Activated CD4-positive, alpha-beta T cell treated with anti-CD3 and anti-CD28 coated beads, Interleukin-2, amount 10 ng/mL, durations not matched to agents 24 days and 14 days (primary cell): ENCODE measurements at regions of chr11 and their contacts with region 1.

Region 1: DNA sequence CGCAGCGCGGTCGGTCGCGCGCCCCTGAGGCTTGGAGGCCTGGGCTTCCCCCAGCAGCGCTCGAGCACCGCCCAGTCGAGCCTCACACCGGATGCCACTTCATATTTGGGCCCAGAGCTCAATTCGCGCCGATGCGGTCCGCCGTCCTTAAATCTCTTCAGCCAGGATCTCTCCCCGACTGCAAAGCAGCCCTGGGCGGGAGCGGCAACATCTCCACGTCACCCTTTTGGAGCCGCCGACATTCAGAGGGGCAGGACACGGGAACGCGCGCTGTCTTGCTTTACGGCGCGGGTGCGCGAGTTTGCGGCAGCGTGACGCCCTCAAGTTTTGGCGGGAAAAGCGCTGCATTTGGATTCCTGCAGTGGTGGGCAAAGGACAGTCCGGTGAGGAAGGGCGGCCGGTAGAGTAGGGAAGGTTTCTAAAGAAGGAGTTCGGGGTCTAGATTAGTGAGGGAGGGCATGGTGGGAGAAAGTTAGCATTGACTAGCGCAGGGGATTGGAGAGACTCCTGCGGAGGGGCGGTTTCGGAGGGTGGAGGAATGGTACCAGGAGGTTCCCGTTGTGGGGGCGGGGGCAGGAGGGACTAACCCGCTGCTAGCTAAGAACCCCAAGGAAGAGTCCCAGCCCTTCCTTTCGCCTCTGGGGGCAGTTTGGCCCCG is 796 bp downstream of the CHEK1 start:
- DNase-seq: peak; percentile 96
- H3K4me3 Mint-ChIP-seq: peak overlapping the region; percentile 93
- H3K27ac Mint-ChIP-seq: peak overlapping the region; percentile 95
- H3K4me1 Mint-ChIP-seq: peaks cover 24% of the 10 kb centered on the region
- H3K27me3 Mint-ChIP-seq: no peaks in the 10 kb centered on the region

Region 2: DNA sequence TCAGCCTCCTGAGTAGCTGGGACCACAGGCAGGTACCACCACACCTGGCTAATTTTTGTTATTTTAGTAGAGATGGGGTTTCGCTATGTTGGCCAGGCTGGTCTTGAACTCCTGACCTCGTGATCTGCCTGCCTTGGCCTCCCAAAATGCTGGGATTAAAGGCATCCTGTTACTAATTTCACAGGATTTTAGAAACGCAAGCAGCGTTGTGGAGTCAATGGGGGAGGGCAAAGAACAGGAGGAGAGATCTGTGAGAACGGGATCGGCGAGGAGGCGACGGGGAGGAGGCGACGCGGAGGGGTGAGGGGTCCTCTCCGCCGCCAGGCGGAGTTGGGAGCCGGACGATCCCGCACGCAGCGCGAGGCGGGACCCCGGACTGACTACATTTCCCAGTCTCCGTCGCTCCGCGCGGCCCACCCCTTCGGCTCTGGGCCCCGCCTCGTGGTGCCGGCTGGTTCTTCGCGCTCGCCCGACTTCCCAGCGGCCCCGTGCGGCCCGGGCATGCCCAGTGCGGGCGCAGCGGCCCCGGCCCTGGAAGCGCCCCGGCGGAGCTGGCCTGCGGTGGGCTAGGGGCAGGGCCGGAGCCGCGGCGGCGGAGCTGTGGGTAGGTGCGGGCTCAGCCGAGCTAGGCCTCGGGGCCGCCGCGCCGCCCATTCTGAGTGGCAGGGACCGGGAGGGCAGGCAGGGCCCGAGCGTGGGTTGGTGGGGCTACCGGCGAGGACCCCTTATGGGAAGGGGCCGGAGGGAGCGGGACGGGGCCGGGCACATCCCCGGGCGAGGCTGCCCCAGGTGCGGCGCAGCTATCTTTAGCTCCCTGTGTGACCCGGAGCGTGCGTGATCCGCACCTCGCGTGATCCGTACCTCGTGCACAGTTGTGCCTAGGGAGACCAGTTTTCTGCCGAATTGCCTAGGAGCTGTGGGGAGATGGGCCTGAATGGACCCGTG is 56.5 kb before region 1 on chr11 and contains the start of gene EI24:
- intact Hi-C with region 1: loop called (anchors 1 kb)
- DNase-seq: peak; percentile 97
- H3K4me3 Mint-ChIP-seq: peak within 1 kb of the TSS; percentile 96
- H3K27ac Mint-ChIP-seq: peak within 1 kb of the TSS; percentile 94
- H3K4me1 Mint-ChIP-seq: peaks cover 18% of the 10 kb centered on the region
- H3K27me3 Mint-ChIP-seq: no peaks in the 10 kb centered on the region
- total RNA-seq, gene EI24: 61.7 TPM in 2 replicates

Region 3: GRCh38 chr11:125663910-125664309 is 38.2 kb after region 1 on chr11:
- intact Hi-C with region 1: loop called (anchors 5 kb)
- DNase-seq: no peak
- H3K4me3 Mint-ChIP-seq: no peak overlapping the region
- H3K27ac Mint-ChIP-seq: peak overlapping the region; percentile 71
- H3K4me1 Mint-ChIP-seq: peaks cover 19% of the 10 kb centered on the region
- H3K27me3 Mint-ChIP-seq: no peaks in the 10 kb centered on the region

Region 4: DNA sequence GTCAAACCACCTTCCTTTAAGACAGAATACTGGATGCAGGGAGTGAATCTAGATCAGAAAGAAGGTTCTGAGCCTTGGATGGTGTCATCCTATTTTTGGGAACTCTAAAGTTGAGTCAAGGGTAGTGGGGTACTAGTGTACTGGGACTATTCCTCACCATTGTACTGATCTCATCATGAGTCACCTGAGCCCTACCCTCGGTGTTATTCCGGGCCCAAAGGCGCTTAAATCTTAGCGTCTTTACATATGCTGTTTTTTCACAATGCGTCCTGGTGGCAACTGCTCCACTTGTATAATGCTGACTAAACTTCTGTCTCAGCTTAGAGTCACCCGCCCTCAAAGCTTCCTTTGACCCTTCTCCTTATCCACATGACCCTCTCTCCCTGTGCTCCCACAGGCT is 95.0 kb after region 1 on chr11:
- intact Hi-C with region 1: no loop called
- DNase-seq: no peak
- H3K4me3 Mint-ChIP-seq: no peak overlapping the region
- H3K27ac Mint-ChIP-seq: no peak overlapping the region
- H3K4me1 Mint-ChIP-seq: no peaks in the 10 kb centered on the region
- H3K27me3 Mint-ChIP-seq: peaks cover 12% of the 10 kb centered on the region

Region 5: DNA sequence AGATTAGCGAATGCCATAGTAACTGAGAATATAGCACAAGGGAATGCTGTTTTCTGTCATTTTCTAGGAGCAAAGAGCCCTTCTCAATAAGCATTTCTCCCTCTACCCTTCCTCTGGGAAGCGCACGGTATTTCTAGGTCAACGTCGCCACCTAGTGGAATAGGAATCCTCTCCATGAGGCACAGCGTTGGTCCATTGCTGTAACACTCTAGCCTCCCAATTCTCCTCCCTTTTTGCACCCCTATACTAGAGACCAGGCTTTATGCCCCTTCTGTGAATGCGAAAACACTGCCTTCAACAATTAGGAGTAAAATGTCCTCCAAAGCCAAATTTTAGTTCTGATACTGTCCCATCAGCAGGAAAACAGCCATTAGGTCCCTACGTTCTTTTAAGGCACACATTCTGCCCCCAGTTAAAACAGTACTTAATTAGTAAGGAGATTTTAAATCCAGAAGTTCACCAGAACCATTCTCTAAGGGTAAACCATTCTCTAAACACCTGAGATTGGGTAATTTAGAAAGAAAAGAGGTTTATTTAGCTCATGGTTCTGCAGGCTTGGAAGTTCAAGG is 248.9 kb after region 1 on chr11:
- intact Hi-C with region 1: loop called (anchors 2 kb)
- DNase-seq: peak; percentile 85
- H3K4me3 Mint-ChIP-seq: no peak overlapping the region
- H3K27ac Mint-ChIP-seq: no peak overlapping the region
- H3K4me1 Mint-ChIP-seq: no peaks in the 10 kb centered on the region
- H3K27me3 Mint-ChIP-seq: peaks cover 26% of the 10 kb centered on the region